ENCODE measurements at regions of chr19 and their contacts with region 1.

Region 1: DNA sequence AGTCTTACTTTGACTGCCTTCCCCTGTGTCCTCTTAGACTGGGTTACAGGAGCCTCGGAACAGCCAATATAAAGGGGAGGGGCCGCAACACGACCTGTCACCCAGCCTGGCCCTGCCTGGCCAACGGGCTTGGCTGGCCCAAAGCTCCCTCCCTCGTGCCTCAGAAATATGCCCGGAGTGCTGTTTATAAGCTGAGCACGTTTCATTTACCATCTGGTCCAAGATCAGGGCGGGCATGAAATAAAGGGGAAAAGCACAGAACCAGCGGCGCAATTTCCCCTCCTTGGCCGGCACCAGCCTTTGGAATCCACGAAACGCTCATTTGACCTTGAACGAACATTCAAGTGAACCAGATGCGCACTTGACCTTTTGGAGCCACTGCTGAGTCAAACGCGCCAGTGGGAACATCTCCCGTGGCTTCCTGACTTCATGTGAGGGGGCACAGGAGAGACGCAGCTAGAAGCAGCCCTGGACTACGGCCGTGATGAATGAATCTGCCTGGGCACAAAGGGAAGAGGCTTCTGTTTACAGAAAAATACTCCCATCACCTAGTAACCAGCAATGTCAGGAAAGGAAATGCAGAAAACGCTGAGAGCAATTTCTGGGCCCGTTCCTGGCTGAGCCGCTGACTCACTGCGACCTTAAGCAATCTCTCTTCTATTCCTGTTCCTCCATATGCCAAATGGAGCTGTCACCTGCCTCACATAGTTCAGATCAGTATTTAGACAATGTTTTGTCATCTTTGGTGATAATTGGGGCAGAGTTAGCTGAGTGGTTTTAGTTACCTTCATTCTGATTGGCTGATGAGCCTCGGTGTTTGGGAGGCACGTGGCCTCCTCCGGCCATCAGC is 53.3 kb downstream of the RFX2 start:
- DNase-seq: peak; percentile 98
- H3K4me3 ChIP-seq: peak overlapping the region; percentile 37 to 42 (median 38)
- H3K27ac ChIP-seq: peak overlapping the region; percentile 92 to 94 (median 94)
- H3K4me1 ChIP-seq: peaks cover 55 to 95% (median 84%) of the 10 kb centered on the region in 4 donors
- H3K27me3 ChIP-seq: no peaks in the 10 kb centered on the region
- CTCF ChIP-seq: no peak
- EP300 ChIP-seq: peak; percentile 48
- POLR2A ChIP-seq: no peak

Region 2: GRCh38 chr19:6087074-6087571 is 30.1 kb after region 1 on chr19:
- intact Hi-C with region 1: no loop called
- DNase-seq: no peak
- H3K4me3 ChIP-seq: peak overlapping the region in 3 of 4 donors; percentile 15 to 32 (median 30)
- H3K27ac ChIP-seq: peak overlapping the region; percentile 90 to 94 (median 91)
- H3K4me1 ChIP-seq: peaks cover 37 to 88% (median 71%) of the 10 kb centered on the region in 4 donors
- H3K27me3 ChIP-seq: no peaks in the 10 kb centered on the region
- CTCF ChIP-seq: no peak
- EP300 ChIP-seq: no peak
- POLR2A ChIP-seq: no peak

Region 3: DNA sequence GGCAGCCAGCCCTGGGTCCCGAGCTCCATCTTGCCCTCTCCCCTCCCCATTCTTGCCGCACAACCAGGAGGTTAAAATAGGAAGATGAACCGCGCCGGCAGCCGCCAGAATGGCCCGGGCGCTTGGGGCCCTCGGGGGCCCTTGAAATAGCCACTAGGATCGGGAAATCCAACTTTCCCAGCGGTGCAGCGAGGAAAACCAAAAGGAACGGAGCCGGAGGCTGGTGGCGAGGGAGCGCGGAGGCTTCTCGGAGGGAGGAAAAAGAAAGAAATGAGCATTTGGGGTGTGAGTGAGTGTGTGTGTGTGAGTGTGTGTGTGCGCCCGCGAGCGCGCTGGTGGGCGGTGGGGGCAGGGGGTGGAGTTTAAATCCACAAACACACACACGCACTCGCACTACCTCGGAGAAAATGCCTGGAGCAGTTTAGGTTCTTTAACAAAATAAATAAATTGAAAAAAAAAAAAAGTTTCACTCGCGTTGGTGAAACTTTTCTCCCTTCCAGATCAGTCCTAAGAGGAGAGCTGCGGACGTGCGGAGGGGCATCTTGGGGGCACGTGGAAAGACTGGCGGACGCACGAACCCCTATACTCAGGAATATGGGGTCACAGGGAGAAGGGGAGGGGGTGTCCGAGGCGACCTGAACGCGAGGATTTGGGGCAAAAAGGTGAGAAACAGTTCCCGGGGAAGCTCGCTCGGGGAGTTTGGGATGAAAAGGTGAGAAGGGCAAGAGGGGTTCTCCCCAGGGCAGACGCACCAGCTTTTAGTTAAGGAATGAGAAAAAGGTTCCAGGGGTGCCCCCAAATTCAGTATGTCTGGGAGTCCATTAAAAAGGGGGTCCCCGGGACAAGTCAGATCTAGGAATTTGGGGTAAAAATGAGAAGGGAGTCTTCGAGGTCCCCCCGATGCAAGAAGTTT is 52.0 kb after region 1 on chr19:
- intact Hi-C with region 1: loop called (anchors 2 kb)
- DNase-seq: peak; percentile 93
- H3K4me3 ChIP-seq: peak overlapping the region; percentile 77 to 97 (median 96)
- H3K27ac ChIP-seq: peak overlapping the region; percentile 89 to 96 (median 91)
- H3K4me1 ChIP-seq: peaks cover 20 to 49% (median 47%) of the 10 kb centered on the region in 4 donors
- H3K27me3 ChIP-seq: no peaks in the 10 kb centered on the region
- CTCF ChIP-seq: no peak
- EP300 ChIP-seq: no peak
- POLR2A ChIP-seq: no peak